ENCODE measurements at regions of chr16 and their contacts with region 1.

Region 1: DNA sequence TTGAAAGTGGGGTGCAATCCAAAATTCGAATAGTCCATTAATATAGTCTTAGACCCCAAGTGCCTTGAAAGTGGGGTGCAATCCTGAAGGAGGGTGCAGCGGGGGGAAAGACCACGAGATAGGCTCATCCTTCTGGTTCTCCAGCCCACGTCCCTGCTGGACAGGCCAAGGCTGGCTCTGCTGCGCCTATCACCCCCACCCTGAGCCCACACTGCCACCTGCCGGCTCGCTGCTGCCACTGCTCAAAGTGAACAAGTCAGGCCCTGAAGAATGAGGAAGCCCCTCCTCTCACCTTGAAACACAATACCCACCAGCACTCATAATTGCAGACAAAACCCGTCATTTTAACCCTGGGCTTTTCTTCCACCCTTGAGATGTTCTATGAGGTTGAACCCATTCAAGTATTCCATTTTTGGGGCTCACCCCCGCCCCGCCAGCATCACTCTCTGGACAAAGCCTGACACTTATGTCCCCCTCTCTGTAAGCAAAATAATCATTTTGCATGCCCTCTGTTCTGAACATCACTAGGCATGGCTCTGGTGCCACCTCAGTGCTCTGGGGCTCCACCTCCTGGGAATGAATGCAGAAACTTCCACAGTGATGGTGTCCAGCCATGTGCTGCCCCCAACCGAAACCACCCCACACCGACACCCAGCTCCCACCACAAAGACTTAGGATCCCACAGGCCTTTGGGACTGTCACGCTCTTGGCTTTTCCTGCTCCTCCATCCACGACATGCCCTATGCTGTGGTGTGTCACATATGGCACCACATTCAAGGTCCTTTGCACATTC is 56.8 kb downstream of the BEAN1 start:
- DNase-seq: peak; percentile 79
- H3K4me3 ChIP-seq: no peak overlapping the region
- H3K27ac ChIP-seq: no peak overlapping the region
- H3K4me1 ChIP-seq: peaks cover 20% of the 10 kb centered on the region
- H3K27me3 ChIP-seq: no peaks in the 10 kb centered on the region
- CTCF ChIP-seq: peak; percentile 96

Region 2: GRCh38 chr16:66357153-66357928 is 126.5 kb before region 1 on chr16:
- intact Hi-C with region 1: loop called (anchors 10 kb)
- DNase-seq: no peak
- H3K4me3 ChIP-seq: no peak overlapping the region
- H3K27ac ChIP-seq: peak overlapping the region; percentile 93
- H3K4me1 ChIP-seq: peaks cover 51% of the 10 kb centered on the region
- H3K27me3 ChIP-seq: peaks cover 36% of the 10 kb centered on the region
- CTCF ChIP-seq: peak; percentile 85

Region 3: DNA sequence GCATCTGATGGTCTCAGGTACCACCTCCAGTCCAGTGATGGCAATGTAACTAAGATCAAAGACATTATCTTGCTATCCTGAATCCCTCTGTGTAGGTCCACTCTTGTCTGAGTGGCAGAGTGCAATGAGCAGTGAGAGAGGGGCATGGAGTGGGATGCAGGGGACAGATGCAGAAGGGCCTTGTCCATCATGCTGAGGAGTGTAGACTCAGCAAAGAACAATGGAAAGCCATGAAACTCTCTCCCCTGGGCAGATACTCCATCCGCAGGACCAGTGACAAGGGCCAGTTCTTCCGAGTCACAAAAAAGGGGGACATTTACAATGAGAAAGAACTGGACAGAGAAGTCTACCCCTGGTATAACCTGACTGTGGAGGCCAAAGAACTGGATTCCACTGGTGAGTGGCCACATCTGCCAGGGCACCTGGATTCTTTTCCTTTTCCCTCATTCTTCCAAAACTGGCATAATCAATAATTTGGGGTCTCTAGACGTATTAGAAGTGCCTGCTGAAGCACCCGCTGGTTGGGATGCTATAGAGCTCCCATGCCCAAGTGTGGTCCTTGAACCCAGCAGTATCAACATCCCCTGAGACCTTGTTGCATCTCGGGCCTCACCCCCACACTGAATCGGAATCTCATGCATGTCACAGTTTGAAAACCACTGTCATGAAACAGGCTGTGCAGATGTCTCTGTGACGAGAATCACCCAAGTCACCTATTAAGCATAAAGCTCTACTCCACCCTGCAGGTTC is 87.9 kb before region 1 on chr16:
- intact Hi-C with region 1: no loop called
- DNase-seq: no peak
- H3K4me3 ChIP-seq: no peak overlapping the region
- H3K27ac ChIP-seq: no peak overlapping the region
- H3K4me1 ChIP-seq: peaks cover 33% of the 10 kb centered on the region
- H3K27me3 ChIP-seq: no peaks in the 10 kb centered on the region
- CTCF ChIP-seq: no peak

Region 4: DNA sequence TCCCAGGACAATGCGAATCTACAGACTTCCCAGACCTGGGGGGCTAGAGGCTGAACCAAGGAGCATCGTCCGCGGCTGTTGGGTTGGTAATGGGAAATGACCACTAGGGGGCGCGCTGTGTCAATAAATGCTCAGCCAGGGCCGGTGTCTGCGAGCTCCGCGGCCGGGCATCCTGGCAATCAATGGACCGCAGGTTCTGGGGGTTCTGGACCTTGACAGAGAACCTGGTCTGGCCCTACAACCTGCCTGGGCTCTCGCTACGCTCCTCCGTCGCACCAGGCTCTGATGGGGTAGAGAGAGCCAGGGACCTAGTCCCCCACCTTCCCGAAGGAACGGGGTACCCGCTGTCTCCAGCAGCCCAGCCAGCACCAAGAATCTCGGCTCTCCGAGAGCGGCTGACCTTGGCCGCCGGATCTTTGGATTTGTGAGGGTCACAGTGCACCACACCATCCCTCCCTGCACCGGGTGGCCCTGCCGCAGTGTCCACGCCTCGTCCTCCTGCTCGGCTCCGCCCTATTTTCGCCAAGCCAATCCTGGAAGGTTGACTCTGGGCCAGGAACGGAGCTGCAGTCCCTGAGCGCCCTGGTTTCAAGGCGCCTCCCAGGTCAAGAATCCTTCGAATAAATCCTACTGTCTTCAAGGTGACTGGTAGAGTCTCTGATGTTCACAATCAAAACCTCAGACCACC is 77.2 kb before region 1 on chr16:
- intact Hi-C with region 1: loop called (anchors 5 kb)
- DNase-seq: peak; percentile 89
- H3K4me3 ChIP-seq: peak overlapping the region; percentile 74
- H3K27ac ChIP-seq: peak overlapping the region; percentile 89
- H3K4me1 ChIP-seq: peaks cover 31% of the 10 kb centered on the region
- H3K27me3 ChIP-seq: peaks cover 8% of the 10 kb centered on the region
- CTCF ChIP-seq: peak; percentile 94

Region 5: GRCh38 chr16:66578651-66579531 is 95.0 kb after region 1 on chr16 and contains the start of gene CMTM2:
- intact Hi-C with region 1: no loop called
- DNase-seq: no peak
- H3K4me3 ChIP-seq: peak within 1 kb of the TSS; percentile 59
- H3K27ac ChIP-seq: no peak within 1 kb of the TSS
- H3K4me1 ChIP-seq: peaks cover 26% of the 10 kb centered on the region
- H3K27me3 ChIP-seq: peaks cover 29% of the 10 kb centered on the region
- CTCF ChIP-seq: no peak
- total RNA-seq, gene CMTM2: not detected

Region 6: DNA sequence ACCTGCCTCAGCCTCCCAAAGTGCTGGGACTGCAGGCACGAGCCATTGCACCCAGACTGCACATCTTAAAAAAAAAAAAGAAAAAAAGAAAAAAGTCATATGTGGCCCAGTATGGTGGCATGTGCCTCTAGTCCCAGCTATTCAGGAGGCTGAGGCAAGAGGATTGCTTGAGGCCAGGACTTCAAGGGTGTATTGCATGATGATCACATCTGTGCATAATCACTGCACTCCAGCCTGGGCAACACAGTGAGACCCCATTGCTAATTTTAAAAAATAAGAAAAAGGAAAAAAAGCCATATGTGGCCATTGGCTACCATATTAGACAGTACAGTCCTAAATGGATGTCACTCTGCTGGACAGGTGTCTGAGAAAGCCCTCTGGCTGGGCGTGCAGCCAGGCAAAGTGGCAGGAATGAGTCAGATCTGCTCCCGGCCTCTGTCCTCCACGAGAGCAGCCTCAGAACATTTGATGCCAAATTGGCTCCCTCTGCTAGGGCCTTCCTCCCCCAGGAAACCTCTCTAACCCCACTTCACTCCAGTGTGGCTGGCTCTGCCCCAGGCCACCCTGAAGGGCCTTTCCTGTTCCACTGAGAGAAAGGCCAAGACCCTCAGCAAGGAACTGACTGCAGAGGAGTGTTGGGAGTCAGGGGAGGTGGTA is 375.0 kb after region 1 on chr16:
- intact Hi-C with region 1: no loop called
- DNase-seq: peak; percentile 71
- H3K4me3 ChIP-seq: no peak overlapping the region
- H3K27ac ChIP-seq: peak overlapping the region; percentile 8
- H3K4me1 ChIP-seq: peaks cover 12% of the 10 kb centered on the region
- H3K27me3 ChIP-seq: no peaks in the 10 kb centered on the region
- CTCF ChIP-seq: no peak

Region 7: GRCh38 chr16:66961065-66961744 is 477.3 kb after region 1 on chr16 and contains the start of gene CES3:
- intact Hi-C with region 1: no loop called
- DNase-seq: peak; percentile 40
- H3K4me3 ChIP-seq: no peak within 1 kb of the TSS
- H3K27ac ChIP-seq: no peak within 1 kb of the TSS
- H3K4me1 ChIP-seq: peaks cover 4% of the 10 kb centered on the region
- H3K27me3 ChIP-seq: peaks cover 4% of the 10 kb centered on the region
- CTCF ChIP-seq: peak; percentile 69
- total RNA-seq, gene CES3: 1.0 TPM

Measured in left ventricle myocardium inferior (tissue), 1 donor.